ENCODE measurements at regions of chr12 and their contacts with region 1.

Region 1: GRCh38 chr12:110282956-110283817 is 2.1 kb downstream of the ATP2A2 start:
- DNase-seq: peak in 2 of 5 donors; percentile 5 to 19
- H3K4me3 ChIP-seq: peak overlapping the region; percentile 61
- H3K4me3 Mint-ChIP-seq: peak overlapping the region; percentile 83 to 97 (median 88)
- H3K27ac ChIP-seq: peak overlapping the region; percentile 86
- H3K27ac Mint-ChIP-seq: peak overlapping the region; percentile 50 to 95 (median 88)
- H3K4me1 ChIP-seq: peaks cover 59% of the 10 kb centered on the region
- H3K4me1 Mint-ChIP-seq: peaks cover 58 to 68% (median 62%) of the 10 kb centered on the region in 3 donors
- H3K27me3 ChIP-seq: no peaks in the 10 kb centered on the region
- H3K27me3 Mint-ChIP-seq: peaks cover 0 to 1% of the 10 kb centered on the region in 2 donors

Region 2: GRCh38 chr12:110124184-110124995 is 158.8 kb before region 1 on chr12 and contains the start of gene IFT81:
- CTCF ChIA-PET with region 1: no interaction called
- POLR2A ChIA-PET with region 1: interaction called, 11 read pairs
- DNase-seq: peak; percentile 89 to 98 (median 95)
- H3K4me3 ChIP-seq: peak within 1 kb of the TSS; percentile 90
- H3K4me3 Mint-ChIP-seq: peak within 1 kb of the TSS; percentile 90 to 96 (median 95)
- H3K27ac ChIP-seq: peak within 1 kb of the TSS; percentile 92
- H3K27ac Mint-ChIP-seq: peak within 1 kb of the TSS; percentile 86 to 97 (median 92)
- H3K4me1 ChIP-seq: peaks cover 6% of the 10 kb centered on the region
- H3K4me1 Mint-ChIP-seq: peaks cover 6 to 9% (median 8%) of the 10 kb centered on the region in 3 donors
- H3K27me3 ChIP-seq: no peaks in the 10 kb centered on the region
- H3K27me3 Mint-ChIP-seq: peaks cover 5 to 7% of the 10 kb centered on the region in 2 donors
- total RNA-seq, gene IFT81: 3.7 to 4.5 TPM

Region 3: GRCh38 chr12:110355073-110355472 is 71.9 kb after region 1 on chr12:
- CTCF ChIA-PET with region 1: no interaction called
- POLR2A ChIA-PET with region 1: no interaction called
- DNase-seq: peak in 1 of 5 donors; percentile 55
- H3K4me3 ChIP-seq: no peak overlapping the region
- H3K4me3 Mint-ChIP-seq: no peak overlapping the region
- H3K27ac ChIP-seq: no peak overlapping the region
- H3K27ac Mint-ChIP-seq: peak overlapping the region in 1 of 8 donors; percentile 2
- H3K4me1 ChIP-seq: peaks cover 6% of the 10 kb centered on the region
- H3K4me1 Mint-ChIP-seq: peaks cover 3 to 20% (median 14%) of the 10 kb centered on the region in 3 donors
- H3K27me3 ChIP-seq: no peaks in the 10 kb centered on the region
- H3K27me3 Mint-ChIP-seq: no peaks in the 10 kb centered on the region